MCF 10A (cell line): ENCODE measurements at regions of chr10 and their contacts with region 1.

Region 1: DNA sequence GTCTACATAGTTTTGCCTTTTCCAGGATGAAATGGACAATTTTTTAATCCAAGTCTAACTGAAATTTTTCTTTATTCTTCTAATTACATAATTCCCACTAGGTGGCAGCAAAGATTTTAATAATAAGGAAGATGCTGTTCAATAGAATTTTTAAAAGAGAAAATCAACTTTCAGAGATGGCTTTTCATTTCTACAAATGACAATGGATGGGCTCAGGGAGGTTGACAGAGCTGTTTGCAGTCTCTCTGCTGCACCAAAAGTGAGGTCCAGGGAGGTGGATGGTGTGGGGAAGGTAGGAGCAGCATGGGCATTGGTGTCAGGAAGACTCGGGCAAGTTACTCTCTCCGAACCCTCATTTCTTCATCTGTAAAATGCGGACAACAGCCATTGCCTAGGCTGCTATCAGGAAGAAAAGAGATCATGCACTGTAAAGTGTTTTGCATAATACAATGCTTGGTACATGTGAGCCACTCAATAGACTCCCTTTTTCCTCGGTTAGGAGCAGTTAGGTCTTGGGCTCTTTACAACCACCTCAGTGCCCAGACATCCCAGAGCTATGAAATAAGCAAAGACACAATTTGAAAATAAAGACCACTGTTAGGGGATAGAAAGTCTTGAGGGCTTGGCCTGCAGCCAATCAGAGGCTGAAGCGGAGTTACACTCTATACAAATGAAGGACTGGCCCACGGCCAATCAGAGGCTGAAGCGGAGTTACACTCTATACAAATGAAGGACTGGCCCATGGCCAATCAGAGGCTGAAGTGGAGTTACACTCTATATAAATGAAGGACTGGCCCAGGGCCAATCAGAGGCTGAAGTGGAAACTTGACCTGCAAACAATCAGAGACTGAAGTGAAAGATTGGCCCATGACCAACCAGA is 107.1 kb downstream of the ABLIM1 start:
- DNase-seq: peak; percentile 39
- H3K4me3 Mint-ChIP-seq: no peak overlapping the region
- H3K27ac Mint-ChIP-seq: no peak overlapping the region
- H3K4me1 Mint-ChIP-seq: peaks cover 13% of the 10 kb centered on the region
- H3K27me3 Mint-ChIP-seq: no peaks in the 10 kb centered on the region
- CTCF ChIP-seq: peak; percentile 42

Region 2: DNA sequence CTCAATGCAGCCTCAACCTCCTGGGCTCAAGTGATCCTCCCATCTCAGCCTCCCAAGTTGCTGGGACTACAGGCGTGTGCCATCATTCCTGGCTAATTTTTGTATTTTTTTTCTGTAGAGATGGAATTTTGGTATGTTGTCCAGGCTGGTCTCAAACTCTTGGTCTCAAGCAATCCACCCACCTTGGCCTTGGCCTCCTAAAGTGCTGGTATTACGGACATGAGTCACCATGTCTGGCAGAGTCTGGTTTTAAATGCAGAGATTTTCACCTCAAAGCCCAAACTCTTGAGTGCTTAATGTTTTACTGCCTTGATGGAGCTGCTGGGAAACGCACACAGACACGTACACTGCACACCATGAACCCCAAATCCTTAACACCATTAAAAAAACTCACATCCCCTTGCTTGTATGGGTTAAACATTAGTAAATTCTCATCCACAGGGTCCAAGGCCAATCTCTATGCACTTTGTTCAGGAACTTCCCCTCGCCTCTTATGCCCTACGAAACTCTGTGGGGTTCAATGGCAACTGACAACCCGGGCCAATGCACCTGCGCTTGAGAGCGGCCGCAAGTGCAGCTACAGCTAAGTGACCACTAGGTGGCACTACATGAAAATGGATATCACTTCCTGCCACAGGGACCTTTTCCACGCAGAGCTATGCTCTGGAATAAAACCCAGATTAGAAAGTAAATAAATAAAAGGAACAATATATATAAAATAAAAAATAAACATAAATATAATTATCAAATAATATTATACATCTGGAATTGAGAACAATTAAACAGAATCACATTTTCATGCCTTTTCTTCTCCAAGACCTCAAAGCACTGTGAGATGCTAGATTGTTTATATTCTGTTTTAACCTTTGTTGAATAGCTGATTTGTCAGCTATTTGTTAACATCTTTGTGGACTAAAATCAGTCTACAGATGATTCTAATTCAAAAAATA is 79.8 kb before region 1 on chr10:
- CTCF ChIA-PET with region 1: interaction called, 114 read pairs
- POLR2A ChIA-PET with region 1: interaction called, 7 read pairs
- intact Hi-C with region 1: loop called (anchors 1 kb)
- DNase-seq: peak; percentile 75
- H3K4me3 Mint-ChIP-seq: no peak overlapping the region
- H3K27ac Mint-ChIP-seq: no peak overlapping the region
- H3K4me1 Mint-ChIP-seq: peaks cover 6% of the 10 kb centered on the region
- H3K27me3 Mint-ChIP-seq: no peaks in the 10 kb centered on the region
- CTCF ChIP-seq: peak; percentile 80

Region 3: GRCh38 chr10:114571316-114571989 is 20.5 kb after region 1 on chr10:
- CTCF ChIA-PET with region 1: interaction called, 21 read pairs
- POLR2A ChIA-PET with region 1: interaction called, 5 read pairs
- intact Hi-C with region 1: no loop called
- DNase-seq: peak; percentile 54
- H3K4me3 Mint-ChIP-seq: no peak overlapping the region
- H3K27ac Mint-ChIP-seq: no peak overlapping the region
- H3K4me1 Mint-ChIP-seq: peaks cover 28% of the 10 kb centered on the region
- H3K27me3 Mint-ChIP-seq: no peaks in the 10 kb centered on the region
- CTCF ChIP-seq: no peak

Region 4: DNA sequence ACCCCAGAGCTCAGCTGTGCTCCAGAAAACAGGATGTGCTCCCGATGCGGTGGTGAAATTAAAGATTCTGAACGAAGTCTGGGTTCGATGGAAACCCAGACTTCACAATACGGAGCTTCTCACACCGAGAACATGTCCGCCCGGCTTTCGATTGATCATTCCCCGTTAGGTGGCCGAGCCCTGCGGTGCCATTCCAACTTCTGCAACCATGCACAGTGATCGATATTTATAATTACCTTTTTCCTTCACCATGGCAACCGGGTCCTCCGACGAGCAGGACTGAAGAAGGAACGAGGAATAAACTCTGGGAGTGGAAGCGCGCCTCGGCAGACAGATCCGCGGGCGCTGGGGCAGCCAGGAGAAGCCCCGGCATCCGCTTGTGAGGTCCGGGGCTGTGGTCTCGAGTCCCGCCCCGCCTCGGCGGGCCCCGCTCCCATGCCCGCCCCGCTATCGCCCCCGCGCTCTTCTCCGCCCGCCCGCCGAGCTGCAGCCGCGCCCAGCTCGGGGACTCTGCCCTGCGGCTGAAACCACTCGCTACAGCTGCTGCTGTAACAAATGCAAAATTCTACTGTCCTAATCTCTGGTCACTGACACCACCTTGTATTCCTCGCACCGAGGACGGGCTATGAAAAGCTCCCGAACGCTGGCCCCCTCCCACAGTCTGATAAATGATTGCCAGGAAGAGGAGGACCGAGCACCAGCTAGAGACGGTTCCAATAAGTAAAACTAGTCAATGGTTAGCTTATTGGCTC is 80.8 kb after region 1 on chr10:
- CTCF ChIA-PET with region 1: interaction called, 7 read pairs
- POLR2A ChIA-PET with region 1: interaction called, 3 read pairs
- intact Hi-C with region 1: loop called (anchors 5 kb)
- DNase-seq: no peak
- H3K4me3 Mint-ChIP-seq: peak overlapping the region; percentile 73
- H3K27ac Mint-ChIP-seq: no peak overlapping the region
- H3K4me1 Mint-ChIP-seq: peaks cover 64% of the 10 kb centered on the region
- H3K27me3 Mint-ChIP-seq: no peaks in the 10 kb centered on the region
- CTCF ChIP-seq: no peak

Region 5: DNA sequence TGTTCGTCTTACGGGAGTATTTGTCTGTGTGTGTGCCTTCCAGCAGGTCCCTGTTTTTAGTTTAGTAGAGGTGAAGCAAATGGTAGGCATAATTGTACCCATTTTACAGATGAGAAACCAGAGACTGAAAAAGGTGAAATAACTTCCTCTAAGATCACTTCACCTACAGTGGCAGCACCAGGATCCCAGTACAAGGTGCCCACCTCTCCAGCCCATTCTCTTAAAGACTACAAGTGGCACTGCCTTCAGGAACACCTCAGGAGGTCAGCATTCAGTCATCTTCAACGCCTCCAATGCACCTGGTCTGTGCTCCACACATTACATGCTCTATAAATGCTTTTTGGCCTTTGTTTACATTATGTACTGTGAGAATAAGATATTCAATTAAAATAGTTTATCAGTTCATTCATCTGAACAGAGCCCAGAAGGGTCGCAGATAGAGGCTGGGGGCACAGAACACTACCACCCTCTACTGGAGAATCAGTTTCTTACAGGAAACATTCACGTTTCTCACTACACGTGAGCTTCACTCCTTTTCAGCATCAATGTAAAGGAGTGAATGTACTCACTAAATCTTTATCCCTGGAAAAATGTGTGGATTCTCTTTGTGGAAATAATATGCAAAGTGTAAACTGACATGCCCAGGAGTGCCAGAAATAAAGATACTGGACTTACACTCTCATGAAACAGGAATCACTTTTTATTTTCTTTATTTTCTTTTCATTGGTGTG is 152.5 kb after region 1 on chr10:
- CTCF ChIA-PET with region 1: interaction called, 80 read pairs
- POLR2A ChIA-PET with region 1: interaction called, 9 read pairs
- intact Hi-C with region 1: loop called (anchors 1 kb)
- DNase-seq: peak; percentile 48
- H3K4me3 Mint-ChIP-seq: no peak overlapping the region
- H3K27ac Mint-ChIP-seq: no peak overlapping the region
- H3K4me1 Mint-ChIP-seq: peaks cover 19% of the 10 kb centered on the region
- H3K27me3 Mint-ChIP-seq: no peaks in the 10 kb centered on the region
- CTCF ChIP-seq: peak; percentile 81

Region 6: GRCh38 chr10:114779803-114780609 is 229.0 kb after region 1 on chr10:
- CTCF ChIA-PET with region 1: interaction called, 111 read pairs
- POLR2A ChIA-PET with region 1: interaction called, 5 read pairs
- intact Hi-C with region 1: no loop called
- DNase-seq: peak; percentile 94
- H3K4me3 Mint-ChIP-seq: no peak overlapping the region
- H3K27ac Mint-ChIP-seq: peak overlapping the region; percentile 74
- H3K4me1 Mint-ChIP-seq: peaks cover 27% of the 10 kb centered on the region
- H3K27me3 Mint-ChIP-seq: no peaks in the 10 kb centered on the region
- CTCF ChIP-seq: no peak

Region 7: GRCh38 chr10:114876602-114877300 is 325.8 kb after region 1 on chr10:
- CTCF ChIA-PET with region 1: interaction called, 3 read pairs
- POLR2A ChIA-PET with region 1: no interaction called
- intact Hi-C with region 1: loop called (anchors 1 kb)
- DNase-seq: peak; percentile 86
- H3K4me3 Mint-ChIP-seq: peak overlapping the region; percentile 53
- H3K27ac Mint-ChIP-seq: peak overlapping the region; percentile 89
- H3K4me1 Mint-ChIP-seq: peaks cover 18% of the 10 kb centered on the region
- H3K27me3 Mint-ChIP-seq: no peaks in the 10 kb centered on the region
- CTCF ChIP-seq: peak; percentile 90

Region 8: GRCh38 chr10:115278294-115278693 is 727.3 kb after region 1 on chr10:
- CTCF ChIA-PET with region 1: no interaction called
- POLR2A ChIA-PET with region 1: no interaction called
- intact Hi-C with region 1: no loop called
- DNase-seq: no peak
- H3K4me3 Mint-ChIP-seq: no peak overlapping the region
- H3K27ac Mint-ChIP-seq: no peak overlapping the region
- H3K4me1 Mint-ChIP-seq: no peaks in the 10 kb centered on the region
- H3K27me3 Mint-ChIP-seq: no peaks in the 10 kb centered on the region
- CTCF ChIP-seq: no peak